HCT116 (cell line): ENCODE measurements at regions of chr5 and their contacts with region 1.

Region 1: GRCh38 chr5:1883120-1883924 is 597 bp upstream of the IRX4 start:
- DNase-seq: no peak
- ATAC-seq: peak; percentile 58
- H3K4me3 ChIP-seq: peak overlapping the region; percentile 62 to 66
- H3K27ac ChIP-seq: peak overlapping the region; percentile 97
- H3K4me1 ChIP-seq: peaks cover 10 to 26% of the 10 kb centered on the region in 2 experiments
- H3K27me3 ChIP-seq: no peaks in the 10 kb centered on the region
- CTCF ChIP-seq: peak in 2 of 3 experiments; percentile 30 to 39; a peak in 3 of 6 replicates
- POLR2A ChIP-seq: no peak
- RAD21 ChIP-seq: no peak

Region 2: DNA sequence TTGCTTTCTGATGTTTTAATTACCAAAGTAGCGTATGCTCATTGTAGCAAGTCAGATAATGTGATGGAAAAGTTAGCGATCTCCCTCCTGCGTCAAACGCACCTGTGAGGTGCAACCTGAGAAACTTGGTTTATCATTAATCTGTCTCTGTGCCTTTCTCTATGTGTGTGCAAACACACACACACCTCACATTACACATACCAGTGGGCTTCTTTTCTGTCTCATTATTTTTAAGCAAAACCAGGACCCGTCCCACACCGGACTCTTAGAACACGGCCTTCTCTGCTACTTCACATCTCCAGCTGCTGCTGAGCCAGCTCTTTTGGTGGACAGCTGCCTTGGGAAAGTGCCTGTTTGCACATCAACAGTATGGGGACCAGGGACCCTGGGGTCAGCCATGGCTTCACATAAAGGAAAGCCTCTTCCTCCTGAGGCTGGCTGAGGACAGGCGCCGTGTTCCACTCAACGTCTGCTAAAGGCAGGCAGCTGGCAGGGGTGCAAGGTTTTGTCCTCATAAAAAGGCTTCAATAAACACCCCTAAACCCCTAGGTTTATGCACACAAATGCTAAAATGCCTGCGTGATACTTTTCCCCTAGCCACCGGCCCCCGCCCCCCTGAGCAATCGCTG is 127.9 kb before region 1 on chr5:
- CTCF ChIA-PET with region 1: no interaction called
- POLR2A ChIA-PET with region 1: no interaction called
- RAD21 ChIA-PET with region 1: no interaction called
- intact Hi-C with region 1: no loop called
- DNase-seq: no peak
- ATAC-seq: no peak
- H3K4me3 ChIP-seq: no peak overlapping the region
- H3K27ac ChIP-seq: no peak overlapping the region
- H3K4me1 ChIP-seq: no peaks in the 10 kb centered on the region
- H3K27me3 ChIP-seq: peaks cover 9% of the 10 kb centered on the region; the same call in 1 of the 2 replicates
- CTCF ChIP-seq: no peak
- POLR2A ChIP-seq: no peak
- RAD21 ChIP-seq: no peak

Region 3: GRCh38 chr5:1799602-1800471 is 83.5 kb before region 1 on chr5 and contains the start of gene MRPL36:
- CTCF ChIA-PET with region 1: no interaction called
- POLR2A ChIA-PET with region 1: interaction called, 3 read pairs
- RAD21 ChIA-PET with region 1: no interaction called
- intact Hi-C with region 1: loop called (anchors 1 kb)
- DNase-seq: peak; percentile 73
- ATAC-seq: peak; percentile 83
- H3K4me3 ChIP-seq: peak within 1 kb of the TSS; percentile 78 to 93
- H3K27ac ChIP-seq: peak within 1 kb of the TSS; percentile 96
- H3K4me1 ChIP-seq: peaks cover 2 to 23% of the 10 kb centered on the region in 2 experiments; a peak in 3 of 4 replicates
- H3K27me3 ChIP-seq: no peaks in the 10 kb centered on the region
- CTCF ChIP-seq: no peak
- POLR2A ChIP-seq: peak; percentile 79
- RAD21 ChIP-seq: no peak
- total RNA-seq, gene MRPL36: 71.9 TPM

Region 4: DNA sequence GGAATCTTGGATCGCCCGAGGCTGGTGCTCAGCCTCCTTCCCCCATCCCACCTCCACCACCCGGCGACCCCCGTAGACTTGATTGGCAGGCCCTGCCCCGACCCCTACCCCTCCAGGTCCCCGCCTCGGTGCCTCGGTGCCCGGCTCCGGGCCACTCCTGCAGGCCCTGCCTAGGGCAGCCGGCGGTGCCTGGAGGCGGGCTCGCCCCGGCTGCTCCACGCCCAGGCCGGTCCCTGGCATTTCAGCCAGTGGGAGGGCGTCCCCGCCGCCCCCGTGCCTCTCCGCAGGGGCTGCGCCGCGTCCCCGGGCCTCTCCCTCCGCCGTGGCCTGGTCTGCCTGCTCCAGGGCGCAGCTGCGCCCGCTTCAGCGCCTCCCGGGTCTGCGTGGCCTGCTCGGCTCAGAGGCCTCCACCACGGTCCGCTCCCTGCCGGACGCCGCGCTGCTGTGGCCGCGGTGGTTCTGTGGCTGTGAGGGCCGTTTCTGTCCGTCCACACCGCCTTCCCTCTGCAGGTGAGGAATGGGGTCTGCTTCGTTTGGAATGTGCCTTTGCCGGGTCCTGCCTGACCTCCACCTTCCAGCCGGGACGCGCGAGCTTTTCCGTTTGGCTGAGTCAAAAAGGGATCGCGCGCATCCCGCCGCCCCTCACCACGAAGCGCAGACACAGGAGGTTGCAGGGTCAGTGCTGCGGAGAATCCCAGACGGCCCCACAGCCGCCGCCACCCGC is 47.7 kb after region 1 on chr5:
- CTCF ChIA-PET with region 1: no interaction called
- POLR2A ChIA-PET with region 1: interaction called, 3 read pairs
- RAD21 ChIA-PET with region 1: no interaction called
- intact Hi-C with region 1: loop called (anchors 5 kb)
- DNase-seq: no peak
- ATAC-seq: no peak
- H3K4me3 ChIP-seq: no peak overlapping the region
- H3K27ac ChIP-seq: no peak overlapping the region
- H3K4me1 ChIP-seq: peaks cover 26 to 37% of the 10 kb centered on the region in 2 experiments
- H3K27me3 ChIP-seq: no peaks in the 10 kb centered on the region
- CTCF ChIP-seq: no peak
- POLR2A ChIP-seq: no peak
- RAD21 ChIP-seq: no peak

Region 5: GRCh38 chr5:2017540-2018389 is 134.4 kb after region 1 on chr5:
- CTCF ChIA-PET with region 1: no interaction called
- POLR2A ChIA-PET with region 1: no interaction called
- RAD21 ChIA-PET with region 1: no interaction called
- intact Hi-C with region 1: loop called (anchors 10 kb)
- DNase-seq: peak; percentile 33
- ATAC-seq: peak; percentile 77
- H3K4me3 ChIP-seq: no peak overlapping the region
- H3K27ac ChIP-seq: no peak overlapping the region
- H3K4me1 ChIP-seq: no peaks in the 10 kb centered on the region
- H3K27me3 ChIP-seq: peaks cover 22% of the 10 kb centered on the region
- CTCF ChIP-seq: peak; percentile 48 to 75 (median 69); a peak in 5 of 6 replicates
- POLR2A ChIP-seq: no peak
- RAD21 ChIP-seq: peak; percentile 62

Region 6: GRCh38 chr5:2093859-2094615 is 210.7 kb after region 1 on chr5:
- CTCF ChIA-PET with region 1: no interaction called
- POLR2A ChIA-PET with region 1: no interaction called
- RAD21 ChIA-PET with region 1: no interaction called
- intact Hi-C with region 1: no loop called
- DNase-seq: no peak
- ATAC-seq: no peak
- H3K4me3 ChIP-seq: no peak overlapping the region
- H3K27ac ChIP-seq: no peak overlapping the region
- H3K4me1 ChIP-seq: no peaks in the 10 kb centered on the region; a peak in 1 of 4 replicates
- H3K27me3 ChIP-seq: peaks cover 35% of the 10 kb centered on the region
- CTCF ChIP-seq: no peak
- POLR2A ChIP-seq: no peak
- RAD21 ChIP-seq: no peak